A673 (cell line): ENCODE measurements at regions of chr6 and their contacts with region 1.

Region 1: GRCh38 chr6:75934643-75935472 is 137.6 kb downstream of the IMPG1 start:
- DNase-seq: peak; percentile 85
- H3K4me3 ChIP-seq: peak overlapping the region; percentile 30
- H3K27ac ChIP-seq: no peak overlapping the region
- H3K4me1 ChIP-seq: peaks cover 5% of the 10 kb centered on the region
- H3K27me3 ChIP-seq: no peaks in the 10 kb centered on the region
- CTCF ChIP-seq: peak; percentile 85

Region 2: GRCh38 chr6:76682842-76683241 is 748.0 kb after region 1 on chr6:
- CTCF ChIA-PET with region 1: no interaction called
- POLR2A ChIA-PET with region 1: no interaction called
- intact Hi-C with region 1: loop called (anchors 10 kb)
- DNase-seq: peak; percentile 6
- H3K4me3 ChIP-seq: no peak overlapping the region
- H3K27ac ChIP-seq: no peak overlapping the region
- H3K4me1 ChIP-seq: no peaks in the 10 kb centered on the region
- H3K27me3 ChIP-seq: no peaks in the 10 kb centered on the region
- CTCF ChIP-seq: peak; percentile 51; the same call in 1 of the 2 replicates

Region 3: GRCh38 chr6:76861403-76861802 is 926.5 kb after region 1 on chr6:
- CTCF ChIA-PET with region 1: no interaction called
- POLR2A ChIA-PET with region 1: no interaction called
- intact Hi-C with region 1: loop called (anchors 5 kb)
- DNase-seq: peak; percentile 25
- H3K4me3 ChIP-seq: no peak overlapping the region
- H3K27ac ChIP-seq: no peak overlapping the region
- H3K4me1 ChIP-seq: no peaks in the 10 kb centered on the region
- H3K27me3 ChIP-seq: no peaks in the 10 kb centered on the region
- CTCF ChIP-seq: peak; percentile 40; the same call in 1 of the 2 replicates

Region 4: GRCh38 chr6:77457720-77458349 is 1523.0 kb after region 1 on chr6:
- CTCF ChIA-PET with region 1: no interaction called
- POLR2A ChIA-PET with region 1: no interaction called
- intact Hi-C with region 1: loop called (anchors 1 kb)
- DNase-seq: peak; percentile 79
- H3K4me3 ChIP-seq: no peak overlapping the region
- H3K27ac ChIP-seq: peak overlapping the region; percentile 55
- H3K4me1 ChIP-seq: peaks cover 11% of the 10 kb centered on the region
- H3K27me3 ChIP-seq: peaks cover 19% of the 10 kb centered on the region
- CTCF ChIP-seq: peak; percentile 71